Activated naive CD4-positive, alpha-beta T cell treated with anti-CD3 and anti-CD28 coated beads for 36 hours (primary cell): ENCODE measurements at regions of chr4 and their contacts with region 1.

Region 1: GRCh38 chr4:81724925-81725329 is 253.2 kb upstream of the RASGEF1B start:
- DNase-seq: peak; percentile 78
- H3K4me3 Mint-ChIP-seq: no peak overlapping the region
- H3K27ac Mint-ChIP-seq: no peak overlapping the region
- H3K4me1 Mint-ChIP-seq: peaks cover 14% of the 10 kb centered on the region
- H3K27me3 Mint-ChIP-seq: no peaks in the 10 kb centered on the region

Region 2: GRCh38 chr4:81844717-81845116 is 119.8 kb after region 1 on chr4:
- CTCF ChIA-PET with region 1: interaction called, 3 read pairs
- intact Hi-C with region 1: loop called (anchors 10 kb)
- DNase-seq: peak; percentile 89
- H3K4me3 Mint-ChIP-seq: no peak overlapping the region
- H3K27ac Mint-ChIP-seq: no peak overlapping the region
- H3K4me1 Mint-ChIP-seq: peaks cover 13% of the 10 kb centered on the region
- H3K27me3 Mint-ChIP-seq: no peaks in the 10 kb centered on the region